ENCODE measurements at regions of chr17 and their contacts with region 1.

Region 1: GRCh38 chr17:7444682-7445618 is at the start of gene CHRNB1:
- DNase-seq: peak; percentile 93
- ATAC-seq: peak; percentile 75
- H3K4me3 Mint-ChIP-seq: peak within 1 kb of the TSS; percentile 87
- H3K27ac Mint-ChIP-seq: peak within 1 kb of the TSS; percentile 99
- H3K4me1 Mint-ChIP-seq: peaks cover 33% of the 10 kb centered on the region
- H3K27me3 Mint-ChIP-seq: peaks cover 39% of the 10 kb centered on the region
- CTCF ChIP-seq: no peak
- total RNA-seq, gene CHRNB1: 16.0 to 21.5 TPM (median 20.8 TPM) in 3 replicates

Region 2: DNA sequence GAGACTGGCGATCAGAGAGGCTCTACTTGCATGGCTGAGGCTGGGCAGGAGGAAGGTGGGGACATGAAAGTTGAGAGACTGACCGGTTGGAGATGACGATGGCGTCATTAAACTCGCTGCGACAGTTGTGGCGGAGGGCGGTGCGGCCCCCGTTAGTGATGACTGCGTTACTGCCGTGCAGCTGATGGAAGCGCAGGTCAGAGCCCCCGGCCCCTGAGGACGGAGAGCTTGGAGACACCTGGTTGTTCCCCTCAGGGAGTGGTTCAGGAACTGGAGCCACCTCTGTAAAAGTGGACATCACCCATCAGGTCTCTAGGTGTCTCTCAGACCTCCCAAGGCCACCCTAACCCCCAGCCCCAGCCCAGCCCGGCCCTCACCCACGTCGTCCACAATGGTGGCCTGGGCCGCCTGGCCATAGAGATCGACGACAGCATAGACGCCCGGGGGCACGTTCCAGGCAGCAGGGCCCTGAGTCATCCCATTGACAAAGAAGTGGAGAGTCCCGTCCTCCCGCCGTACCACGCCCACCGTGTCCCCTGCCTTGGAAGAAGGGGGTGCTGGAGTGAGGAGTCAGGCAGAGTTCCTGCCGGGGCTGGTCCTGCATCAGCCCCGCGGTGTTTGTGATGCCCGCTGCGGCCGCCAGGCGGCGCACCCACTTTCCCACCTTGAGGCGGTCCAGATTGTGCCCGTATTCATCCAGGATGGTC is 121.1 kb before region 1 on chr17:
- CTCF ChIA-PET with region 1: no interaction called
- POLR2A ChIA-PET with region 1: no interaction called
- DNase-seq: peak; percentile 92
- ATAC-seq: peak; percentile 85
- H3K4me3 Mint-ChIP-seq: no peak overlapping the region
- H3K27ac Mint-ChIP-seq: no peak overlapping the region
- H3K4me1 Mint-ChIP-seq: peaks cover 11% of the 10 kb centered on the region
- H3K27me3 Mint-ChIP-seq: no peaks in the 10 kb centered on the region
- CTCF ChIP-seq: peak; percentile 98

Region 3: GRCh38 chr17:7394452-7395191 is 50.3 kb before region 1 on chr17 and contains the start of gene PLSCR3:
- CTCF ChIA-PET with region 1: interaction called, 21 read pairs
- POLR2A ChIA-PET with region 1: no interaction called
- DNase-seq: peak; percentile 87
- ATAC-seq: peak; percentile 78
- H3K4me3 Mint-ChIP-seq: peak within 1 kb of the TSS; percentile 90
- H3K27ac Mint-ChIP-seq: peak within 1 kb of the TSS; percentile 85
- H3K4me1 Mint-ChIP-seq: peaks cover 11% of the 10 kb centered on the region
- H3K27me3 Mint-ChIP-seq: no peaks in the 10 kb centered on the region; the same call in 1 of the 2 replicates
- CTCF ChIP-seq: no peak
- total RNA-seq, gene PLSCR3: 34.1 to 42.7 TPM (median 37.6 TPM) in 3 replicates

Region 4: GRCh38 chr17:7403977-7404736 is 40.8 kb before region 1 on chr17 and contains the start of gene TMEM256:
- CTCF ChIA-PET with region 1: interaction called, 9 read pairs
- POLR2A ChIA-PET with region 1: interaction called, 10 read pairs
- DNase-seq: peak; percentile 99
- ATAC-seq: peak; percentile 87
- H3K4me3 Mint-ChIP-seq: peak within 1 kb of the TSS; percentile 84
- H3K27ac Mint-ChIP-seq: peak within 1 kb of the TSS; percentile 85
- H3K4me1 Mint-ChIP-seq: peaks cover 29% of the 10 kb centered on the region
- H3K27me3 Mint-ChIP-seq: no peaks in the 10 kb centered on the region; the same call in 1 of the 2 replicates
- CTCF ChIP-seq: no peak
- total RNA-seq, gene TMEM256: 132 to 180 TPM (median 178 TPM) in 3 replicates

Region 5: DNA sequence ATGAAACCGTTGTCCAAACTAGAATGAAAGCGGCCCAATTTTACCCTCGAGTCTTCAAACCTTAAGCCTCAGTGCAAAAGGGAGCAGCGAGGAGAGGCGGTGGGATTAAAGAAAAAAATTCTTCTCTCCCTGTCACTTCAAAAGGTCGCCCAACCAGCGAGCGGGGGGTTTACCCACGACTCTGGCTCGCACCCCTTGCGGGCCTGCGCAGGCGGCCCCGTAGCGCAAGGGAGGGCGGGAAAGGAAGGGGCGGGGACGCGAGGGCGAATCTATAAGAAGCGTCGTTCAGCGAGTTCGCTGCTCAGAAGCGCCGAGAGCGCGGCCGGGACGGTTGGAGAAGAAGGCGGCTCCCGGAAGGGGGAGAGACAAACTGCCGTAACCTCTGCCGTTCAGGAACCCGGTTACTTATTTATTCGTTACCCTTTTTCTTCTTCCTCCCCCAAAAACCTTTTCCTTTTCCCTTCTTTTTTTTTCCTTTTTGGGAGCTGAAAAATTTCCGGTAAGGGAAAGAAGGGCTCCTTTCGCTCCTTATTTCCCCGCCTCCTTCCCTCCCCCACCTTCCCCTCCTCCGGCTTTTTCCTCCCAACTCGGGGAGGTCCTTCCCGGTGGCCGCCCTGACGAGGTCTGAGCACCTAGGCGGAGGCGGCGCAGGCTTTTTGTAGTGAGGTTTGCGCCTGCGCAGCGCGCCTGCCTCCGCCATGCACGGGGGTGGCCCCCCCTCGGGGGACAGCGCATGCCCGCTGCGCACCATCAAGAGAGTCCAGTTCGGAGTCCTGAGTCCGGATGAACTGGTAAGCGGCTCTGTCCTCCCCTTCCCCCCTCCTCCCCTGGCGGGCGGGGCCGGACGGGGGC is 39.3 kb after region 1 on chr17 and contains the start of gene POLR2A:
- CTCF ChIA-PET with region 1: interaction called, 16 read pairs
- POLR2A ChIA-PET with region 1: interaction called, 15 read pairs
- DNase-seq: peak; percentile 96
- ATAC-seq: peak; percentile 65
- H3K4me3 Mint-ChIP-seq: peak within 1 kb of the TSS; percentile 90
- H3K27ac Mint-ChIP-seq: peak within 1 kb of the TSS; percentile 99
- H3K4me1 Mint-ChIP-seq: peaks cover 60% of the 10 kb centered on the region
- H3K27me3 Mint-ChIP-seq: no peaks in the 10 kb centered on the region
- CTCF ChIP-seq: no peak
- total RNA-seq, gene POLR2A: 166 to 170 TPM (median 170 TPM) in 3 replicates

Measured in WTC11 (cell line).